ENCODE measurements at regions of chr16 and their contacts with region 1.

Region 1: GRCh38 chr16:20801278-20801677 is 5.0 kb downstream of the ERI2 start:
- DNase-seq: no peak
- H3K4me3 Mint-ChIP-seq: no peak overlapping the region
- H3K27ac Mint-ChIP-seq: no peak overlapping the region
- H3K4me1 Mint-ChIP-seq: peaks cover 18% of the 10 kb centered on the region
- H3K27me3 Mint-ChIP-seq: no peaks in the 10 kb centered on the region

Region 2: GRCh38 chr16:21083729-21084268 is 282.5 kb after region 1 on chr16:
- CTCF ChIA-PET with region 1: no interaction called
- intact Hi-C with region 1: loop called (anchors 2 kb)
- DNase-seq: peak; percentile 68
- H3K4me3 Mint-ChIP-seq: no peak overlapping the region
- H3K27ac Mint-ChIP-seq: no peak overlapping the region
- H3K4me1 Mint-ChIP-seq: no peaks in the 10 kb centered on the region
- H3K27me3 Mint-ChIP-seq: peaks cover 6% of the 10 kb centered on the region

Region 3: DNA sequence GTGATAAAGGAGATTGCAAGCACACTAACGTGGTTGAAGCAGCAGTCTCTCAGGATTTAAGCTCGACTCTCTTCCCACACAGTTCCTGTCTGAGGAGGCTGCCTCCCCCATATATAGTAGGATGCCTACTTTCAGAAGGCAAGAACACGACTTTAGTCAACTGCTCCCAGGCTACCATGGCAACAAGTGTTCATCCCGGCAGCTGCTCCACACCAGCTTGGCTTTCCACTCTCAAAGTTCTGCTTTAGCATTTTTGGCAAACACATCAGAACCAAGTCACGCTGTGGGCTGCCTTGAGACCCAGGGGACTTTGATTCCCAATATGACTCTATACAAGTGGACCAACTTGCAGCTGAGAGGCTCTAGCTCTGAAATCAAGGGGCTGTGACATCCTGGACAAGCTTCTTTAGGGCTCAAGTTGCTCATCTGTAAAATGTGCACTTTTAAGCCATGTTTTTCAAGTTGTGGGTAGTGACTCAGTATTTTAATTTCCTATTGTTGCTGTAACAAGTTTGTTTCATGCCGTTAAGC is 393.6 kb after region 1 on chr16:
- CTCF ChIA-PET with region 1: no interaction called
- intact Hi-C with region 1: no loop called
- DNase-seq: no peak
- H3K4me3 Mint-ChIP-seq: no peak overlapping the region
- H3K27ac Mint-ChIP-seq: no peak overlapping the region
- H3K4me1 Mint-ChIP-seq: peaks cover 9% of the 10 kb centered on the region
- H3K27me3 Mint-ChIP-seq: no peaks in the 10 kb centered on the region

Measured in activated naive CD4-positive, alpha-beta T cell treated with anti-CD3 and anti-CD28 coated beads for 36 hours (primary cell).